ENCODE measurements at regions of chr22 and their contacts with region 1.

Region 1: GRCh38 chr22:38201710-38202436 is at the start of gene MAFF:
- DNase-seq: peak; percentile 95
- H3K4me3 ChIP-seq: peak within 1 kb of the TSS; percentile 78 to 91 (median 87)
- H3K27ac ChIP-seq: peak within 1 kb of the TSS; percentile 77
- H3K4me1 ChIP-seq: peaks cover 23% of the 10 kb centered on the region
- H3K27me3 ChIP-seq: no peaks in the 10 kb centered on the region
- CTCF ChIP-seq: no peak
- total RNA-seq, gene MAFF: 17.0 to 48.5 TPM

Region 2: GRCh38 chr22:37777122-37777687 is 424.7 kb before region 1 on chr22:
- CTCF ChIA-PET with region 1: no interaction called
- dilution Hi-C with region 1: no loop called
- in situ Hi-C with region 1: no loop called
- intact Hi-C with region 1: no loop called
- DNase-seq: peak; percentile 99
- H3K4me3 ChIP-seq: no peak overlapping the region
- H3K27ac ChIP-seq: peak overlapping the region; percentile 99
- H3K4me1 ChIP-seq: peaks cover 40% of the 10 kb centered on the region
- H3K27me3 ChIP-seq: no peaks in the 10 kb centered on the region
- CTCF ChIP-seq: no peak

Region 3: GRCh38 chr22:38104084-38104483 is 97.8 kb before region 1 on chr22:
- CTCF ChIA-PET with region 1: no interaction called
- dilution Hi-C with region 1: no loop called
- in situ Hi-C with region 1: no loop called
- intact Hi-C with region 1: loop called (anchors 1 kb)
- DNase-seq: no peak
- H3K4me3 ChIP-seq: no peak overlapping the region
- H3K27ac ChIP-seq: no peak overlapping the region
- H3K4me1 ChIP-seq: no peaks in the 10 kb centered on the region
- H3K27me3 ChIP-seq: no peaks in the 10 kb centered on the region
- CTCF ChIP-seq: peak in 1 of 2 donors; percentile 43

Region 4: DNA sequence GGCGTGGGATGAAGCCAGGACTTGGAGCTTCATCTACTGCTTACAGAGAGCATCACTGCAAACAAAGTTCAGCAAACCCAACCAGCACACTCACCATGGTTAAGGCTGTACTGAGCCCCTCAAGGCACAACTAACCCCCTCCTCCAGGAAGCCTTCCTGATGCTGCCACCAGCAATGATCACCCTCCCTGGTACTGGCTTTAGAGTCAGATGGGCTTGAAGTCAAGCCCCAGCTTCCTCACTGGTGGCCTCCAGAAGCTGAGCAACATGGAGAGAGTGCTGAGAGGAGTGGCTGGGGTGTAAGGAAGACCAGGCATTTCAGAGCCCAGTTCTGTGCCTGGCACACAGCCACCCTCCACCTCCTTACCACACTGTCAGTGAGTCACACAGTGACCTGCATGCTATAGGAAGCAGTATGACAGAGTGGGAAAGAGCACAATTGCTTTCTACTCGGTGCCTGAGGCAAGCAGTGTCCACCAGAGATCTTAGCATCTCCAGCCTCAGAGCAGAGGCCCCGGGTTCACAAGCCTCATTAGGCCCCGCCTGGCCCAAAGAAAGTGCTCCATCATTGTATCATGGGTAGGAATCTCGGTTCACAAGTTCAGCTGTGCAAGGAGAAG is 66.6 kb before region 1 on chr22:
- CTCF ChIA-PET with region 1: no interaction called
- dilution Hi-C with region 1: no loop called
- in situ Hi-C with region 1: no loop called
- intact Hi-C with region 1: loop called (anchors 5 kb)
- DNase-seq: peak; percentile 94
- H3K4me3 ChIP-seq: no peak overlapping the region
- H3K27ac ChIP-seq: peak overlapping the region; percentile 73
- H3K4me1 ChIP-seq: peaks cover 16% of the 10 kb centered on the region
- H3K27me3 ChIP-seq: no peaks in the 10 kb centered on the region
- CTCF ChIP-seq: no peak

Region 5: DNA sequence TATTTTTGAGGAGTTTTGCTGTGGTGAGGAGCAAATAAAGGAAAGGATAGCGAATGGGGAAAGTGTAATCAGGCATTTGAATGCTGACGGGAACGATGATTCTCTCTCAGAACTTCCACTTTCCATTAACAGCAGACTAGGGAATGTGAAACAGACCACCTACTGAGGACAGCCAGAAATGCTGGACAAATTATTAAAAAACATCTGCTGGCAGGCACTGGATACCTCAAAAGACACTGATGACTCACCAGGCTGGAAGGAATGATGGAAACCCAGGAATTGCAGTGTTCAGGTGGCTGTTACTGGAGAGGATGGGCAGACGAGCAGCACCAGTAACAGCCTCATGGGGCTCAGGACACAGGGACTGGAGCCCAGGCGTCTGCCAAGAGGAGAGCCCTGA is 53.6 kb before region 1 on chr22:
- CTCF ChIA-PET with region 1: no interaction called
- dilution Hi-C with region 1: no loop called
- in situ Hi-C with region 1: no loop called
- intact Hi-C with region 1: no loop called
- DNase-seq: peak; percentile 70
- H3K4me3 ChIP-seq: no peak overlapping the region
- H3K27ac ChIP-seq: peak overlapping the region; percentile 19
- H3K4me1 ChIP-seq: peaks cover 26% of the 10 kb centered on the region
- H3K27me3 ChIP-seq: no peaks in the 10 kb centered on the region
- CTCF ChIP-seq: no peak

Region 6: GRCh38 chr22:38240734-38241252 is 38.9 kb after region 1 on chr22:
- CTCF ChIA-PET with region 1: no interaction called
- dilution Hi-C with region 1: no loop called
- in situ Hi-C with region 1: no loop called
- intact Hi-C with region 1: loop called (anchors 5 kb)
- DNase-seq: peak; percentile 83
- H3K4me3 ChIP-seq: no peak overlapping the region
- H3K27ac ChIP-seq: peak overlapping the region; percentile 77
- H3K4me1 ChIP-seq: peaks cover 53% of the 10 kb centered on the region
- H3K27me3 ChIP-seq: no peaks in the 10 kb centered on the region
- CTCF ChIP-seq: no peak

Region 7: GRCh38 chr22:38317122-38317994 is 115.5 kb after region 1 on chr22 and contains the start of gene CSNK1E:
- CTCF ChIA-PET with region 1: no interaction called
- dilution Hi-C with region 1: loop called (anchors 5 kb)
- in situ Hi-C with region 1: no loop called
- intact Hi-C with region 1: no loop called
- DNase-seq: peak; percentile 64
- H3K4me3 ChIP-seq: peak within 1 kb of the TSS; percentile 75 to 92 (median 77)
- H3K27ac ChIP-seq: peak within 1 kb of the TSS; percentile 94
- H3K4me1 ChIP-seq: peaks cover 49% of the 10 kb centered on the region
- H3K27me3 ChIP-seq: no peaks in the 10 kb centered on the region
- CTCF ChIP-seq: no peak
- total RNA-seq, gene CSNK1E: 156 to 370 TPM